A549 (cell line): ENCODE measurements at regions of chr9 and their contacts with region 1.

Region 1: DNA sequence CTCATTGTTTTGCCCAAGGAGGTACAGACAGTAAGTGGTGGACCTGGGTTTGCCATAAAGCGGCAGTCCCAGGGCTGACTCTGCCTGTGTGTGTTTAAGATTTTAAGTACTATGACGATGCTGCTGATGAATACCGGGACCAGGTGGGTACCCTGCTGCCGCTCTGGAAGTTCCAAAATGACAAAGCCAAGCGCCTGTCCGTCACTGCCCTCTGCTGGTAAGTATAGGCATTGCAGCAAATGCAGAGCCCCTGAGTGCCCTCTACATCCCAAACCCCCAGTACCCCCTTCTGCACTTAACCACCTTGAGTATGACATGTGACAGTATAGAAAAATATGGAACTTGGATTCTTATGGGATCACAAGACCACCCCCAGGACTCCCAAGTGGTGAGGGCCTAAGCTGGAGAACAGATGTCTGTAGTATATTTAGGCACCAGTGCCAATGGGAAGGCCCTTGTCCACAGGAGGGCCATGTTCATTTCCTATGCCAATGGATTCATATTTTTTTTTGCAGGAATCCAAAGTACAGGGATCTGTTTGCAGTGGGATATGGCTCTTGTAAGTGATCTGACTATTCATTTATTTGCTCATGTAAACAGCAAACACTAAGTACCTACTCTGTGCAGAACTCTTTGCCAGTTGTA is 22.0 kb downstream of the ENHO start:
- DNase-seq: peak; percentile 43 to 73
- ATAC-seq: peak; percentile 62 to 84
- H3K4me3 ChIP-seq: no peak overlapping the region
- H3K27ac ChIP-seq: no peak overlapping the region
- H3K4me1 ChIP-seq: peaks cover 6% of the 10 kb centered on the region; the same call in 1 of the 3 replicates
- CTCF ChIP-seq: peak; percentile 93
- EP300 ChIP-seq: no peak
- POLR2A ChIP-seq: no peak
- RAD21 ChIP-seq: peak; percentile 83 to 85

Region 2: DNA sequence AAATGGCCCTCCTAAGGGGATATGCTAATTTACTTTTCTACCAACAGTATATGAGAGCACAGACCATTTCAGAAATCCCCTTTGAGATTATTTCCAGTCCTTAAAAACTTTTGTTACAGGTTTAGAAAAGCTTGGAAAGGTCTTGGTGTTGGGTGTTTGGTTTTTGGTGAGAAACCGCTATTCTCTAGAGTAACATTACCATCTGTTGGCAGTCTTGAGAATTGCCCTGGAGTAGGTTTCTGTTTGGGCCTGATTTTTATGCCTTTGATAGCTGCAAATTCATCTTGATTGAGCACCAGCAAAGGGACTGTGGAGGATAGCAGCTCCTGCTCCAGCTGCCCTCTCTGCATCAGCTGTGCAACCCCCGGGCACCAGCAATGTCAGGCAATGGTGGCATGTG is 163.3 kb before region 1 on chr9:
- CTCF ChIA-PET with region 1: interaction called, 32 read pairs
- POLR2A ChIA-PET with region 1: no interaction called
- DNase-seq: peak in 1 of 2 experiments; percentile 16
- ATAC-seq: no peak
- H3K4me3 ChIP-seq: no peak overlapping the region
- H3K27ac ChIP-seq: no peak overlapping the region
- H3K4me1 ChIP-seq: peaks cover 4% of the 10 kb centered on the region; the same call in 2 of the 3 replicates
- CTCF ChIP-seq: no peak
- EP300 ChIP-seq: no peak
- POLR2A ChIP-seq: no peak
- RAD21 ChIP-seq: peak; percentile 11 to 39; a peak in 2 of 5 replicates

Region 3: DNA sequence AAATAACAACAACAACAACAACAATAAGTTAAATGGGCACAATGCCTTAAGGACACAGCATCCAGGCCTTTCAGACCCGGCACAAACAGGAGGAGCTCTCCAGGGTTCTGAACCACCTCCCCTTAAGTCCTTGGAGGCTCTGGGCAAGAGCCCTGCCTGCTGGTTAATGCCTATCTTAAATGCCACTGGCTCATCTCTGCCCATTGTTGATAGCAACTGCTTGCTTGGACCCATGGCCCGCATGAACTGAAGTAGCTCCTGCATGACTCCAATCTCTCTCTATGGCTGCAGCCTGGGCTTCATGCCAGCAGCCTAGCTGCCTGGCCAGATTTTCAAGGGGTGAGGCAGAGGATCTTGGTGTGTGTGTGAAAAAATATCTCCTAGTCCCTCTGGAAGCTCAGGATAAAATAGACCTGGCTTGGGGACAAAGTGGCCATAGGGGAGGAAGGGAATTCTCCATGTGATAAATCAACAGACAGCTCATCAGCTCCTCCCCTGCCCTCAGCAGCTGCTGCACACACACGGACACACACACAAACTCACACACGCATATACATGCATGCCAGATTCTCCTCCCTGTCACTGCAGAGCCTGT is 69.8 kb before region 1 on chr9:
- CTCF ChIA-PET with region 1: interaction called, 70 read pairs
- POLR2A ChIA-PET with region 1: no interaction called
- DNase-seq: peak; percentile 8 to 49
- ATAC-seq: peak; percentile 63 to 68; a peak in 5 of 6 replicates
- H3K4me3 ChIP-seq: no peak overlapping the region
- H3K27ac ChIP-seq: no peak overlapping the region
- H3K4me1 ChIP-seq: no peaks in the 10 kb centered on the region
- CTCF ChIP-seq: no peak
- EP300 ChIP-seq: no peak
- POLR2A ChIP-seq: no peak
- RAD21 ChIP-seq: no peak

Region 4: DNA sequence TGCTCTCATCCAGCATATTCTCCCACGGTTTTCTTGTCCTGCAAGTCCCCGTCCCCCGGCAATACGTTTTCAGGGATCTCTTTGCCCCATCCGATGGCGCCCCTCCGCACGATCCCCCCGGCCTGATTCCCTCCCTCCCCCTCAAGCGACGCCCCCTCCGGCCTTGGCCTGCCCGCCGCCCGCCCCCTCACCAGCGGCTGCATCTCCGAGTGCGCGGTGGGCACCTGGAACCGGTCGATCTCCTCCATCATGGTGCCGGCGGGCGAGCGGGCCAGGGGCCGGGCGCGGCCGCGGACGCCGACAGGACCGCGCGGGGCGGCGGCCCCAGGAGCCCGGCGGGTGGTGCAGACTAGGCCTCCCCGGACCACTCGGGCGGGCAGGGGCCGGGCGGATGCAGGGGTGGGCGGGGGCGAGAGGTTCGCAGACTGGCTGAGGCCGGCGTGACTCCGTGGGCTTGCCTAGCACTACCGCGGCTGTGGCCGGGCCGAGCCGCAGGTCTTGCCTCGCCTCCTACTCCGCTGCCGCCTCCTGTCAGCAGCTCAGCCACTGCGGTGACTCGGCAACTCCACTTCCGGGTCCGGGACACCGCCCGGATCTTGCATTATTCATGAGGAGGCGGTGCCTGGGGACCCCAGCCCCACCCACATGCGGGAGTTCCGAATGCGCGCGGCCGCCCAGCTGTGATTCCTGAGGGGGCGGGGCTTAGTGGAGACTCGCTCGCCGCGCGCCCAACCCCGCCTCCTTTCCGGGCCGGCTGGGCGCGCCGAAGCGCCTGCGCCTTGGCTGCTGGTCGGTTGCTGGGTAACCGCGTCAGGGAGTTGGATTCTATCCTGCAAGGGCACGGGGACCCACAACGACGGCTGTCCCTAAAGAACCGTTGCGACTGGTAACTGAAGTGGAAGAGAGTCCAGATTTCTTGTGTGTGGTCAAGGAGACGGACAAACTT is 42.5 kb before region 1 on chr9 and contains the starts of genes DNAI1 and FAM219A:
- CTCF ChIA-PET with region 1: interaction called, 70 read pairs
- POLR2A ChIA-PET with region 1: no interaction called
- DNase-seq: peak; percentile 94 to 98
- ATAC-seq: peak; percentile 92 to 95
- H3K4me3 ChIP-seq: peak within 1 kb of the TSS; percentile 87
- H3K27ac ChIP-seq: peak within 1 kb of the TSS; percentile 84 to 94
- H3K4me1 ChIP-seq: peaks cover 17% of the 10 kb centered on the region; the same call in 2 of the 3 replicates
- CTCF ChIP-seq: no peak
- EP300 ChIP-seq: no peak
- POLR2A ChIP-seq: peak; percentile 78
- RAD21 ChIP-seq: no peak
- polyA plus RNA-seq, gene DNAI1: 0.16 and 0.27 TPM in 2 replicates
- polyA plus RNA-seq, gene FAM219A: 8.1 and 10.4 TPM in 2 replicates

Region 5: DNA sequence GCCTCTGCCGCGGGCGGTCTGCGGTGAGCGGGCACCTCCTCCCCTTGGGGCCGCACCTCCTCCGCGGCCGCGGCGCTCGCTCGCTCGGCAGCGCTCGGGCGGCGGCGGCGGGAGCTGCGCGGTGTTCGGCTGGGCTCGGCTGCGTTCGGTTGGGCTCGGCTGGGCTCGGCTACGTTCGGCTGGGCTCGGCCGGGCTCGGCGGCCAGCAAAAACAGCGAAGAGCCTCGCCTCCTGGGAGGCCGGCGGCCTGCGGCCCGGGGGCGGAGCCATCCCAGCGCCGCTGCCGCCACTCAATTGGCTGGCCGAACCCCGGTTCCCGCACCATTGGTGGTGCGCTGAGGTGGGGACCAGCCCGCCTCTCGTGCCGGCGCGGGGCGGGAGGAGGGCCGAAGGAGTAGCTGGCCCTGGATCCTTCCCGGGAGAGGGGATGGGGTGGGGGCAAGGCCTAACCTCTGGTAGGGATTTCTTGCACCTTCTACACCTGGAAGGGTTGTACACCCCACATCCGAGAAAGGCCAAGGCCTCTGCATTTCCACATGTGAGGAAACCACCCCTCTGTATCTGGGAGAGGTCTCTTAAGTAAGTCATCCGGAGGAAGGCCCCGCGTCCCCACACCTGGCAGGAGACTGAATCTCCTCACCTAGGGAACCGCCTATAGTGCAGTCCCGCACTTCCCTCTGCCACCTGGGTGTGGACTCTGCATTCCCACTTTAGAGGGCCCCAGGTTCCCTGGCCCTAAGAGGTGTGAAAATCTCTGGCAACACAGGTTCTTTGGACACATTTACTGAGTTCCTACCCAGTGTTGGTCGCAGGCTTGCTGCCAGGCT is 22.4 kb after region 1 on chr9 and contains the start of gene ENHO:
- CTCF ChIA-PET with region 1: interaction called, 114 read pairs
- POLR2A ChIA-PET with region 1: no interaction called
- DNase-seq: peak; percentile 83 to 94
- ATAC-seq: peak; percentile 92 to 99
- H3K4me3 ChIP-seq: peak within 1 kb of the TSS; percentile 58
- H3K27ac ChIP-seq: peak within 1 kb of the TSS; percentile 70 to 85
- H3K4me1 ChIP-seq: peaks cover 8% of the 10 kb centered on the region; the same call in 2 of the 3 replicates
- CTCF ChIP-seq: no peak
- EP300 ChIP-seq: no peak
- POLR2A ChIP-seq: peak; percentile 20; the same call in 1 of the 2 replicates
- RAD21 ChIP-seq: no peak
- polyA plus RNA-seq, gene ENHO: 0.28 and 0.32 TPM in 2 replicates